CD8-positive, alpha-beta T cell (primary cell): ENCODE measurements at regions of chr2 and their contacts with region 1.

Region 1: GRCh38 chr2:105369747-105370690 is 28.8 kb downstream of the FHL2 start:
- DNase-seq: peak; percentile 73 to 91 (median 87)
- ATAC-seq: peak; percentile 100
- H3K4me3 ChIP-seq: no peak overlapping the region
- H3K4me3 Mint-ChIP-seq: no peak overlapping the region
- H3K27ac ChIP-seq: no peak overlapping the region
- H3K27ac Mint-ChIP-seq: no peak overlapping the region
- H3K4me1 ChIP-seq: peaks cover 6% of the 10 kb centered on the region
- H3K4me1 Mint-ChIP-seq: peaks cover 11% of the 10 kb centered on the region
- H3K27me3 ChIP-seq: no peaks in the 10 kb centered on the region
- H3K27me3 Mint-ChIP-seq: peaks cover 2% of the 10 kb centered on the region
- CTCF ChIP-seq: peak; percentile 81

Region 2: DNA sequence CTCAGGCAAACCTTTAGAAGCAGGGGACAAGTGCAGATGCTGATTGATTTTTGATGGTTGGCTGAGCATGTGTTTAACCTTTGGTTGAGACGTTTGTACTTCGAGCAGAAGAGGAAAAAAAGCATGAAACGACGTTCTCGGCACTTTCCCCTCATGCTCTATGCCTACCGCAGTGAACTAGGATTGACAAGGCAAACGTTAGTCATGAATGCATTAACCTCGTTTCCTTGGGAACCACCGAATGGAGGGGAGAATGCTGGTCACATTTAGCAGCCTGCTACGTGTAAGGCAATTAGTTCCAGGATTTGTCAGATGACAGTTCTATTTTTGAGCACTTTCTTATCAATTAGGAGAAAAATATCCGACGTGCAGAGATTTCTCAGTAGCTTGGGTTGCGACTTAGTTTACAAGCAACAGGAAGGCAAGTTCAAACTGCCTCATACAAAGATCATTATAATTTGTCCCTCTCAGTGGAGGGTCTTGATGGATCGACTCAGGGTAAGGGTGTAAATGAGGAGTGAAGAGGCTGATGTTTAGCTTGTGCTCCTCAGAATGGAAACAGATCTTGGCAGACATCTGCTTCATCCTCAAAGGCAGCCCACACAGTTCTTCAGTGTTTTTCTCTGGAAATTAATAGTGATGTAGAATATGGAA is 175.9 kb before region 1 on chr2:
- CTCF ChIA-PET with region 1: no interaction called
- POLR2A ChIA-PET with region 1: no interaction called
- intact Hi-C with region 1: no loop called
- DNase-seq: no peak
- ATAC-seq: no peak
- H3K4me3 ChIP-seq: no peak overlapping the region
- H3K4me3 Mint-ChIP-seq: no peak overlapping the region
- H3K27ac ChIP-seq: no peak overlapping the region
- H3K27ac Mint-ChIP-seq: no peak overlapping the region
- H3K4me1 ChIP-seq: no peaks in the 10 kb centered on the region
- H3K4me1 Mint-ChIP-seq: no peaks in the 10 kb centered on the region
- H3K27me3 ChIP-seq: no peaks in the 10 kb centered on the region
- H3K27me3 Mint-ChIP-seq: peaks cover 31% of the 10 kb centered on the region
- CTCF ChIP-seq: no peak

Region 3: DNA sequence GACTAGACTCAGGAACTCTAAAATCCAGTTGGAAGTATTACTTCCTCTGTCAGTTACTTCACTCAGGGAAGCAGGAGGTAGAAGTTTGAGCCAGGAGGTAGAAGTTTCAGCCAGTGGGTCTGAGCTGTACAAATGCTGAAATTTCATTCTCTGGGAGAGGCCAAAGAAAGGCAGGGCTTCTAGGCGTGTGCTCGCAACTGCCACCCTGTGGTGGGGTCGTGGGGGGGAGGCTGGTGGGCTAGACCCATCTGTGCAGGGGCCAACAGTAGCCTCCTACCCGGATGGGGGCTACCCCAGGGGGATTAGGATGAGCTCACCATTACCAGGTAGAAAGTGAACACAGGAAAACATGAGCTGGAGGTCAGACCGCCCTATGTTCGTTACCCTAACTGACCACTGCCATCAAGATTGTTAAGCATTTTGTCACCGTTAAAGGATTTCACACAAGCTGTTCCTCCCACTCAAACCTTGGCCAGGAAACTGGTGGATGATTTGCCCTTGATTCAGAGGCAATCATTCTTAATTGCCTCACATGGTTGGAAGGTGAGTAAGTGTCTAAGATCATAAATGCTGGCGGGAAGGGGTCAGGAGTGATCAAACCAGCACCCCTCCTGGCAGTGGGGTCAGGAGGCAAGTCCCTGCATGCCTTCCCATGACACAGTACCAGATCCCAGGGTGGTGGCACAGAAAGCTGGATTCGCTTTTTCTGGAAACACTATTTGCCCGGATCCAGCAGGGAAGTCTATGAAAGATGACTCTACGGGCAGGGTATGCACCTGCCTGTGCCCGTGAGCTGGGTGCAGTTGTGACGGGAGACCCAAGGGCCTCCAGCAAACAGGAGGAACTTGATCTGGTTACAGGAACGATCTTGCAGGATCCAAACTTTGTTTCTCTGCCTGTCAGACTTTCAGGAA is 34.0 kb after region 1 on chr2:
- CTCF ChIA-PET with region 1: interaction called, 3 read pairs
- POLR2A ChIA-PET with region 1: no interaction called
- intact Hi-C with region 1: loop called in 1 of 2 experiments (anchors 1 kb)
- DNase-seq: no peak
- ATAC-seq: no peak
- H3K4me3 ChIP-seq: no peak overlapping the region
- H3K4me3 Mint-ChIP-seq: no peak overlapping the region
- H3K27ac ChIP-seq: no peak overlapping the region
- H3K27ac Mint-ChIP-seq: no peak overlapping the region
- H3K4me1 ChIP-seq: peaks cover 5% of the 10 kb centered on the region
- H3K4me1 Mint-ChIP-seq: peaks cover 2% of the 10 kb centered on the region
- H3K27me3 ChIP-seq: peaks cover 0 to 8% of the 10 kb centered on the region in 2 experiments
- H3K27me3 Mint-ChIP-seq: peaks cover 18% of the 10 kb centered on the region
- CTCF ChIP-seq: no peak

Region 4: DNA sequence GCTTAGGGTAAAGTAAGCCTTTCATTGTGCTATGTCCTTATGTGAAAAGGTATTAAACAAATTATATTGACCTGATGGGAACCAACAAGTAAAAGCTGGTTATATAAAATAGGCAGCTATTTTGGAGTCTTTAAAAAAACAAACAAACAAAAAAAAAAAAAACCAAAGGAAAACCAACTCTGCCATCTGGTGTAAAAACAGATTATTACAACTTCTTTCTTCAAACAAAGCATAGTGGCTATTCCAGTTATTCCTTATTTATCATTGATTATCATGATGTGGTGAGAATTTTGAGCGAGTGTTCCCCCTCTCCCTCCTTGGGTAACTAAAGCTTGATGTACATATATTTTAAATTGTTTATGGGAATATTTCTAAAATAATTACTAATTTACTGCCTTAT is 151.2 kb after region 1 on chr2:
- CTCF ChIA-PET with region 1: interaction called, 122 read pairs
- POLR2A ChIA-PET with region 1: interaction called, 3 read pairs
- intact Hi-C with region 1: loop called (anchors 1 kb)
- DNase-seq: peak in 2 of 9 experiments; percentile 29 to 50
- ATAC-seq: no peak
- H3K4me3 ChIP-seq: no peak overlapping the region
- H3K4me3 Mint-ChIP-seq: no peak overlapping the region
- H3K27ac ChIP-seq: no peak overlapping the region
- H3K27ac Mint-ChIP-seq: no peak overlapping the region
- H3K4me1 ChIP-seq: no peaks in the 10 kb centered on the region
- H3K4me1 Mint-ChIP-seq: no peaks in the 10 kb centered on the region
- H3K27me3 ChIP-seq: no peaks in the 10 kb centered on the region
- H3K27me3 Mint-ChIP-seq: no peaks in the 10 kb centered on the region
- CTCF ChIP-seq: peak; percentile 74

Region 5: GRCh38 chr2:105545730-105546627 is 176.0 kb after region 1 on chr2:
- CTCF ChIA-PET with region 1: interaction called, 18 read pairs
- POLR2A ChIA-PET with region 1: no interaction called
- intact Hi-C with region 1: loop called (anchors 1 kb)
- DNase-seq: peak; percentile 39 to 77 (median 68)
- ATAC-seq: peak; percentile 78
- H3K4me3 ChIP-seq: no peak overlapping the region
- H3K4me3 Mint-ChIP-seq: peak overlapping the region; percentile 47
- H3K27ac ChIP-seq: no peak overlapping the region
- H3K27ac Mint-ChIP-seq: no peak overlapping the region
- H3K4me1 ChIP-seq: peaks cover 5% of the 10 kb centered on the region
- H3K4me1 Mint-ChIP-seq: peaks cover 14% of the 10 kb centered on the region
- H3K27me3 ChIP-seq: no peaks in the 10 kb centered on the region
- H3K27me3 Mint-ChIP-seq: peaks cover 3% of the 10 kb centered on the region
- CTCF ChIP-seq: peak; percentile 96

Region 6: GRCh38 chr2:106582148-106583143 is 1212.4 kb after region 1 on chr2:
- CTCF ChIA-PET with region 1: interaction called, 4 read pairs
- POLR2A ChIA-PET with region 1: no interaction called
- intact Hi-C with region 1: loop called in 1 of 2 experiments (anchors 2 kb)
- DNase-seq: peak; percentile 26 to 74 (median 60)
- ATAC-seq: peak; percentile 83
- H3K4me3 ChIP-seq: peak overlapping the region; percentile 54 to 57
- H3K4me3 Mint-ChIP-seq: peak overlapping the region; percentile 91
- H3K27ac ChIP-seq: no peak overlapping the region
- H3K27ac Mint-ChIP-seq: no peak overlapping the region
- H3K4me1 ChIP-seq: peaks cover 5% of the 10 kb centered on the region
- H3K4me1 Mint-ChIP-seq: peaks cover 15% of the 10 kb centered on the region
- H3K27me3 ChIP-seq: peaks cover 0 to 4% of the 10 kb centered on the region in 2 experiments
- H3K27me3 Mint-ChIP-seq: peaks cover 44% of the 10 kb centered on the region
- CTCF ChIP-seq: peak; percentile 93